HEK293 (cell line): ENCODE measurements at regions of chr5 and their contacts with region 1.

Region 1: GRCh38 chr5:1174122-1174936 is 27.1 kb upstream of the SLC6A19 start:
- H3K4me3 ChIP-seq: no peak overlapping the region
- H3K27ac ChIP-seq: no peak overlapping the region
- H3K4me1 ChIP-seq: no peaks in the 10 kb centered on the region; the same call in 1 of the 2 replicates
- CTCF ChIP-seq: peak; percentile 82

Region 2: DNA sequence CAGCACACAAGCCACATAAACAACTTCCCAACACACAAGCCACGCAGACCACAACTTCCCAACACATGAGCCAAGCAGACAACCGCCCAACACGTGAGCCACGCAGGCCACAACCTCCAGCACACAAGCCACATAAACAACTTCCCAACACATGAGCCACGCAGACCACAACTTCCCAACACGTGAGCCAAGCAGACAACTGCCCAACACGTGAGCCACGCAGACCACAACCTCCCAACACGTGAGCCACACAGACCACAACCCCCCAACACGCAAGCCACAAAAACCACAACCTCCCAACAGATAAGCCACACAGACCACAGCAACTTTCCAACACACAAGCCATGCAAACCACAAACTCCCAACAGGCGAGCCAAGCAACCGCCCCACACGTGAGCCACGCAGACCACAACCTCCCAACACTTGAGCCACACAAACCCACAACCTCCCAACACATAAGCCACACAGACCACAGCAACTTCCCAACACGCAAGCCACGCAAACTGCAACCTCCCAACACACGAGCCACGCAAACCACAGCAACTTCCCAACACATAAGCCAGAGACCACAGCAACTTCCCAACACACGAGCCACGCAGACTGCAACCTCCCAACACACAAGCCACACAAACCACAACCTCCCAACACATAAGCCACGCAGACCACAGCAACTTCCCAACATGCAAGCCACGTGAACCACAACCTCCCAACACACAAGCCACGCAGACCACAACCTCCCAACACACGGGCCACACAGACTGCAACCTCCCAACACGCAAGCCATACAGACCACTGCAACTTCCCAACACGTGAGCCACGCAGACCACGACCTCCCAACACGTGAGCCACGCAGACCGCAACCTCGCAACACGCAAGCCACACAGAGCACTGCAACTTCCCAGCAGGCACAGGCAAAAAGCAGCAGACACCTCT is 291.8 kb before region 1 on chr5:
- CTCF ChIA-PET with region 1: no interaction called
- POLR2A ChIA-PET with region 1: no interaction called
- H3K4me3 ChIP-seq: no peak overlapping the region
- H3K27ac ChIP-seq: no peak overlapping the region
- H3K4me1 ChIP-seq: no peaks in the 10 kb centered on the region
- CTCF ChIP-seq: no peak

Region 3: DNA sequence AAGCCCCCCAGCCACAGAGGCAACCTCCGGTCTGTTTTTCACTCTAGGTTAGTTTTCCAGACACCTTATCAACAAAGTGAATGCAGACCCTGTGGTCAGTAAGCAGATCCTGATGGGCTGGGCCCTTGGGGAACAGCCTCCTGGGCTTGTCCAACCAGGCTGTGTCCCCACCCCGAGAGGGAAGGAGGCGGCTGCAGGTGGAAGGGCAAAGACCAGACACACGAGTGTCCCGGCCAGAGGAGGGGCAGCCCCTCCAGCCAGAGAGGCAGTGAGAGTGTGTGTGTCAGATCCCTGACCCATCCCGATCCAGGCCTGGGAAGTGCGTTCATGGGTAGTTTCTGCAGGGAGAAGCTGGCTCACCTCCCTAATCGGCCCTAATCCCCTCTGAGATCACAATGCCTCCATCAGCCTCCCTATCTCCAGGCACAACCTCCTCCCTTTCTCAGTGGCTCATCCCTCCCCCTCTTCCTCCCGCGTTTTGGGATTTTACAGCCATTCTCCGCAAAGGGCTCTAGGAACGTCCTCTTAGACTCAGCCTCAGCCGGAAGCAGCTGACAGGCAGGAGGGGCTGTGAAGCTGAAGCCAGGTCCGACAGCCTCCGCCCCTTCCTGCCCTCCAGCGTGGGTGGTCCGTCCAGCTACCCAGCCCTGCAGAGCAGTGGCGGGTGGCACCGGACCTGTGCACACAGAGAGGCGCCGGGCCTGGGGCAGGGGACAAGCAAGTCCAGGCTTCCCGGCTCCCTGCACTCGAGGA is 72.2 kb before region 1 on chr5:
- CTCF ChIA-PET with region 1: no interaction called
- POLR2A ChIA-PET with region 1: no interaction called
- H3K4me3 ChIP-seq: no peak overlapping the region
- H3K27ac ChIP-seq: no peak overlapping the region
- H3K4me1 ChIP-seq: no peaks in the 10 kb centered on the region; the same call in 1 of the 2 replicates
- CTCF ChIP-seq: no peak

Region 4: DNA sequence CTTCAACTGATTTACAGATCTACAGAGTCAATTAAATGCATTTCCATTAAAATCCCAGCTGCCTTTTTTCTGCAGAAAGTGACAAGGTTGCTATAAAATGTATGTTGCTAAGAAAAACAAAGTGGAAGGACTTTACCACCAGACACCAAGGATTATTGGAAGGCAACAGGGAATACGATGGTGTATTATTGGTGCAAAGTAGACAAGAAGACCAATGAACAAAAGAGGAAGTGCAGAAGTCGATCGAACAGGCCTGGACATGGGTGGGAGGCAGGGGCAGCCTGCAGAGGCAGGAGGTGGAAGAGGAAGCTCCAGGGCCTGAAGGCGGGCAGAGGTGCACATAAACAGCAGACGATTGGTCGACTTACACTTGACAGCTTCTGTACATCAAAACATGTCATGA is 16.5 kb after region 1 on chr5:
- CTCF ChIA-PET with region 1: interaction called, 42 read pairs
- POLR2A ChIA-PET with region 1: no interaction called
- H3K4me3 ChIP-seq: no peak overlapping the region
- H3K27ac ChIP-seq: no peak overlapping the region
- H3K4me1 ChIP-seq: no peaks in the 10 kb centered on the region
- CTCF ChIP-seq: no peak

Region 5: DNA sequence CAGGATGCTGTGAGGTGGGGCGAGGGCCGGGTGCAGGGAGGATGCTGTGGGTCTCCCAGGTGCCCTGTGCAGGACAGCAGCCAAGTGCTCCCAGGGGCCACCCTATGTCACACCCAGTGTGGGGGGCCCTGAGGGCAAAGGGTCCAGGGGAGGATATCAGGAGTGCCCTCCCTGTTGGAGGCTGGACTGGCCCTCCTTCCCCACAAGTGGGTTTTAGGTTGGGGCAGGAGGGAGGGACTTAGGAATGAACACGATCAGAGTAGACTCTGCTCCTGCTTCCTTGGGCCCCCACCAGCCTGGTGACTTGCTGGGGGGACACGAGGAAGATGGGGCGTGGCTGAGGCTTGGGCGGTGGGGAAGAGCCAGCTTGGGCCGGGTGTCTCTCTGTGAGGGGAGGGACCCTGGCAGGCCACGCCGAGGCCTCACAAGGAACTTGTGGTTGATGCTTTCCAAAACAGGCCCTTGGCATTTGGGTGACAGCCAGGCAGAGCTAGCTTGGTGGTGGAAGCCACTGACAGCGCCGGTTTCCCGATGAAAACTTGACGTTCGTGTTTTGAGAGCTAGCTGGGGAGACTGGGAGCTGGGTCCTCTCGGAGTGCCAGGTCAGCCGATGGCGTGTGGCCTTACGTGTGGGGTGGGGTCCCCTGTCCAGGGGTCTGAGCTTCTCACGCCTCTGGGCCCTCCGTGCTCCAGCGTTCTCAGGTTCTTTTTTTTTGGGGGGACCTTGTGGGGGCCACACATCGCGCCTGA is 478.4 kb after region 1 on chr5:
- CTCF ChIA-PET with region 1: interaction called, 12 read pairs
- POLR2A ChIA-PET with region 1: no interaction called
- H3K4me3 ChIP-seq: no peak overlapping the region
- H3K27ac ChIP-seq: no peak overlapping the region
- H3K4me1 ChIP-seq: no peaks in the 10 kb centered on the region
- CTCF ChIP-seq: no peak